Psoas muscle (tissue), 8 donors: ENCODE measurements at regions of chr17 and their contacts with region 1.

Region 1: DNA sequence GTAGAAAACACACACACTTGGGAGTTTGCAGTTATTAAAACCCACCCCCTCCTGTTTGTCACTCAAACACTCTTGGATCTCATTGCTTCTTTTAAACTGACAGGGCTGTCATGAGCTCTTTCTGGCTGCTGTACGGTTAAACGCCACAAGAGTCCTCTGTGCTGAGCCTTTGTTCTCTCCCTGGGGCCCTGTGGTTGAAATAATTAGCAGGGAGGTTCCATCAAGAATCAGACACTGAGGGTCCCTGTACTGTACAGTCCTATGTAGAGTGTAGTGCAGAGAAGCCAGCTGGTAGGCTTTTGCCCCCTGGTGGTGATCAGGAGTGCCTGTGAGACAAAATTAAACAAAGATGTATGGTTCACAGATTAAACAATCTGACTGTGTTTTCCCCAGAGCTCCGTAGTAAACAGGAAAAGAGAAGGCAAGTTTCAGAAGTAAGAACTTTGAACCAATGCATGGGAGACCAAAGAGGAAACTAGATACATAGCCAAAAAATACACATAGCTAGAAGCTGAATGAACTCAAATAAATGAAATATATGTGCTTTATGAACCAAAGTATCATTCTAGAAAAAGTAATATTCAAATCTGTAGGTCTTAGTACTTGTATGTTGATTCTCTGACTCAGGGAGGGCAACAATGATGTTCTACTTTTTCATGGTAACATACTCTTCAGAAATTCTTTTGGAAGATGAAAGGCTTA is 1.4 kb upstream of the SSH2 start:
- DNase-seq: peak; percentile 32 to 64
- ATAC-seq: peak; percentile 62 to 70 (median 66)
- H3K4me3 ChIP-seq: peak overlapping the region; percentile 75
- H3K27ac ChIP-seq: peak overlapping the region; percentile 90
- H3K4me1 ChIP-seq: peaks cover 37% of the 10 kb centered on the region
- H3K27me3 ChIP-seq: no peaks in the 10 kb centered on the region
- CTCF ChIP-seq: peak; percentile 85

Region 2: GRCh38 chr17:29579866-29580771 is 351.3 kb before region 1 on chr17:
- intact Hi-C with region 1: loop called in 1 of 2 experiments (anchors 10 kb)
- DNase-seq: peak; percentile 88 to 95
- ATAC-seq: peak; percentile 88 to 94 (median 90)
- H3K4me3 ChIP-seq: no peak overlapping the region
- H3K27ac ChIP-seq: peak overlapping the region; percentile 42
- H3K4me1 ChIP-seq: peaks cover 27% of the 10 kb centered on the region
- H3K27me3 ChIP-seq: no peaks in the 10 kb centered on the region
- CTCF ChIP-seq: peak; percentile 90

Region 3: DNA sequence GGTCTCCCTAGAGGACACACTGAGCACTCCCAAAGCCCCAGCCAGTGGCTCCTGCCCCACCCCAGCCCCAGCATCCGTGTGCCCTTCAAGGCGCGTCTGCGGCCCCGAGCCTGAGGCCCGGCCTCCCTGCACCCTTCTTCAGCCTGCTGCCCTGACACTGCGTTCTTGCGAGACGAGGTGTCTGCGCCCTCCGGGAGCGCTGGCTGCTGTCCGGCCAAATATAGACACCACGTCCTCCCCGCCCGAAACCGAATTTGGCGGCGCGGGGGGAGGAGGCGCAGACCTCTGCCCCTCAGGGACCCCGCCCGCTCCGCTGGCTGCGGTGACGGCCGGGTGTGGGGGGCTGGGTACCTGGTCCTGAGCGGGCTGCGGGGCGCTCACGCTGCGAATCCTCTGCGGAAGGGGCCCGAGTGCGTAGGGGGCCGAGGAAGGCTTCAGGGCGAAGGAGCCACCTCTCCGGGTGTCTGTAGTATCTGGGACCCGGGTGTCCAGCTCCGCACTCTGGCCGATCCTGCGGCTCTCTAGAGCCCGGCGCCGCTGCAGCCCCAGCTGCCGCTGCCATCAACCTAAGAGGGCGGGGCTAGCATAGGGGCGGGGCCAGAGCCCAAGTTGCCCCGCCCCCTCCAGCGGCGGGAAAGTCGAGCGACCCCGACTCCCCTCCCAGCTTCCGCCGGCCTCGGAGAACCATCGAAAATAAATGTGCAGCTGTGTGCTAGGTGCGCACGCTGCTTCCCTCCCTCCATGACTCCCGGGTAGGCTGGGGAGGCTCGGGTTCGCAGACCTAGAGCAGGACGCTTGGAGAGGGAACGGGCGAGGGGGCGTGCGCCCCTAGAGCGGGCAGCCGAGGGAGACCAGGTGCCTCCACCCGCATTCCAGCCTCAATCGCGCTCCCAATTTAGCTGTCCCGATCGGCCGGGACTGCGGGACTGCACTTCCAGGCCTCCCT is 308.8 kb before region 1 on chr17 and contains the start of gene CORO6:
- intact Hi-C with region 1: loop called in 1 of 2 experiments (anchors 5 kb)
- DNase-seq: peak; percentile 66 to 90
- ATAC-seq: peak; percentile 65 to 70 (median 68)
- H3K4me3 ChIP-seq: peak within 1 kb of the TSS; percentile 98
- H3K27ac ChIP-seq: peak within 1 kb of the TSS; percentile 99
- H3K4me1 ChIP-seq: peaks cover 58% of the 10 kb centered on the region
- H3K27me3 ChIP-seq: no peaks in the 10 kb centered on the region
- CTCF ChIP-seq: no peak
- total RNA-seq, gene CORO6: 478 to 710 (median 557) TPM

Region 4: DNA sequence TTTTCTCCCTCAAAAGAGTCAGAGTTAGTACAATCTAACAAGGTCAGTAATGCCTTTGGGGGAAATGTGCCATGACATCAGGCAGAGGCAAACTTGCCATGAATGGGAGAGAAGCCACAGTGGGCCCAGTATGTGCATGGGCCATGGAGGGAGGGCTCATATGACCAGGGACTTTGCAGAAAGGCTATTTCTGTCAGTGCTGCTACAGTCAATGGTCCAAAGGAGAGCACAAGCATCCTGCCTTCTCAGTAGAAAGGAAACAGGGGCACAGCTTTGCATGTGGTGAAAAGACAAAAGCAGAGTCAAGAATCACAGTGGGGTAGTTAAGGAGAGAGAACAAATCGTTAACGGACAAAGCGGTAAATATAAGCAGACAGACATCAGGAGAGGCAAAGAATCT is 297.5 kb before region 1 on chr17:
- intact Hi-C with region 1: loop called in 1 of 2 experiments (anchors 10 kb)
- DNase-seq: no peak
- ATAC-seq: peak in 2 of 4 donors; percentile 30 to 46
- H3K4me3 ChIP-seq: no peak overlapping the region
- H3K27ac ChIP-seq: peak overlapping the region; percentile 94
- H3K4me1 ChIP-seq: peaks cover 64% of the 10 kb centered on the region
- H3K27me3 ChIP-seq: no peaks in the 10 kb centered on the region
- CTCF ChIP-seq: no peak

Region 5: GRCh38 chr17:29807520-29808351 is 123.6 kb before region 1 on chr17:
- intact Hi-C with region 1: loop called (anchors 1 to 2 kb)
- DNase-seq: peak; percentile 42 to 56
- ATAC-seq: peak; percentile 73 to 87 (median 76)
- H3K4me3 ChIP-seq: no peak overlapping the region
- H3K27ac ChIP-seq: no peak overlapping the region
- H3K4me1 ChIP-seq: no peaks in the 10 kb centered on the region
- H3K27me3 ChIP-seq: no peaks in the 10 kb centered on the region
- CTCF ChIP-seq: peak; percentile 80

Region 6: DNA sequence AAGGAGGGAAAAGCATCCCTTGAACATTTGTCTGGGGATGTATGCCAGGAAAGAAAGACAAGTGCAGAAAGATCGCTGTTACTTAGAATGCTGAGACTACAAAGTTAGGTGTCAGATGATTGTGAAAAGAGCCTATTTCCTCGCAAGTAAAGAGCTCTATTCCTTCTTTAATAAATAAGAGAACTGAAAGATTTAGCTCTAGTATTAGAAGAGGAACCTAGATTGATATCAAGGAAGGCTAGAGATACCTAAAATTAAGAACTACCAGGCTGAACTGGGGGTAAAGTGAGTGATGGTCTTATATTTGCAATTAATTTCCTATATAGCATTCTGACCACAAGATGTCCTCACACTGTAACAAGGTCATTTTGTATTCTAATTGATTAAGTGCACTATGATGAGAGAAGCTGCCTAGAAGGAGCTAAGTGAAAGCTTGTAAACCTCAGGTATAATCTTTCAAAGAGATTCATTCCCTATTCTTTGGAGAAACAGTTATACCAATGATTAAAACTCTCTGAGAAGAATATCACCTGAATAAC is 63.7 kb before region 1 on chr17:
- intact Hi-C with region 1: loop called in 1 of 2 experiments (anchors 10 kb)
- DNase-seq: no peak
- ATAC-seq: no peak
- H3K4me3 ChIP-seq: no peak overlapping the region
- H3K27ac ChIP-seq: no peak overlapping the region
- H3K4me1 ChIP-seq: peaks cover 14% of the 10 kb centered on the region
- H3K27me3 ChIP-seq: no peaks in the 10 kb centered on the region
- CTCF ChIP-seq: peak; percentile 18